GM23248 (cell line): ENCODE measurements at regions of chr6 and their contacts with region 1.

Region 1: GRCh38 chr6:7615611-7616383 is 25.8 kb downstream of the SNRNP48 start:
- DNase-seq: peak; percentile 75
- H3K4me3 ChIP-seq: peak overlapping the region; percentile 56
- H3K27ac ChIP-seq: no peak overlapping the region
- H3K4me1 ChIP-seq: peaks cover 19% of the 10 kb centered on the region
- H3K27me3 ChIP-seq: no peaks in the 10 kb centered on the region

Region 2: GRCh38 chr6:6676910-6677441 is 938.8 kb before region 1 on chr6:
- in situ Hi-C with region 1: loop called (anchors 25 kb)
- DNase-seq: peak; percentile 79
- H3K4me3 ChIP-seq: no peak overlapping the region
- H3K27ac ChIP-seq: no peak overlapping the region
- H3K4me1 ChIP-seq: no peaks in the 10 kb centered on the region
- H3K27me3 ChIP-seq: no peaks in the 10 kb centered on the region; the same call in 1 of the 2 replicates

Region 3: GRCh38 chr6:7270320-7271204 is 345.2 kb before region 1 on chr6:
- in situ Hi-C with region 1: loop called (anchors 10 kb)
- DNase-seq: no peak
- H3K4me3 ChIP-seq: no peak overlapping the region
- H3K27ac ChIP-seq: no peak overlapping the region
- H3K4me1 ChIP-seq: peaks cover 8% of the 10 kb centered on the region
- H3K27me3 ChIP-seq: no peaks in the 10 kb centered on the region

Region 4: GRCh38 chr6:7304821-7305220 is 311.0 kb before region 1 on chr6:
- in situ Hi-C with region 1: loop called (anchors 5 kb)
- DNase-seq: no peak
- H3K4me3 ChIP-seq: no peak overlapping the region
- H3K27ac ChIP-seq: no peak overlapping the region
- H3K4me1 ChIP-seq: peaks cover 8% of the 10 kb centered on the region; the same call in 1 of the 2 replicates
- H3K27me3 ChIP-seq: no peaks in the 10 kb centered on the region